Endothelial cell of umbilical vein (primary cell): ENCODE measurements at regions of chr17 and their contacts with region 1.

Region 1: GRCh38 chr17:48878918-48879898 is 13.4 kb upstream of the ATP5MC1 start:
- DNase-seq: peak; percentile 76
- H3K4me3 ChIP-seq: no peak overlapping the region
- H3K27ac ChIP-seq: no peak overlapping the region
- H3K4me1 ChIP-seq: no peaks in the 10 kb centered on the region
- H3K27me3 ChIP-seq: no peaks in the 10 kb centered on the region
- CTCF ChIP-seq: peak; percentile 87 to 89
- POLR2A ChIP-seq: no peak

Region 2: DNA sequence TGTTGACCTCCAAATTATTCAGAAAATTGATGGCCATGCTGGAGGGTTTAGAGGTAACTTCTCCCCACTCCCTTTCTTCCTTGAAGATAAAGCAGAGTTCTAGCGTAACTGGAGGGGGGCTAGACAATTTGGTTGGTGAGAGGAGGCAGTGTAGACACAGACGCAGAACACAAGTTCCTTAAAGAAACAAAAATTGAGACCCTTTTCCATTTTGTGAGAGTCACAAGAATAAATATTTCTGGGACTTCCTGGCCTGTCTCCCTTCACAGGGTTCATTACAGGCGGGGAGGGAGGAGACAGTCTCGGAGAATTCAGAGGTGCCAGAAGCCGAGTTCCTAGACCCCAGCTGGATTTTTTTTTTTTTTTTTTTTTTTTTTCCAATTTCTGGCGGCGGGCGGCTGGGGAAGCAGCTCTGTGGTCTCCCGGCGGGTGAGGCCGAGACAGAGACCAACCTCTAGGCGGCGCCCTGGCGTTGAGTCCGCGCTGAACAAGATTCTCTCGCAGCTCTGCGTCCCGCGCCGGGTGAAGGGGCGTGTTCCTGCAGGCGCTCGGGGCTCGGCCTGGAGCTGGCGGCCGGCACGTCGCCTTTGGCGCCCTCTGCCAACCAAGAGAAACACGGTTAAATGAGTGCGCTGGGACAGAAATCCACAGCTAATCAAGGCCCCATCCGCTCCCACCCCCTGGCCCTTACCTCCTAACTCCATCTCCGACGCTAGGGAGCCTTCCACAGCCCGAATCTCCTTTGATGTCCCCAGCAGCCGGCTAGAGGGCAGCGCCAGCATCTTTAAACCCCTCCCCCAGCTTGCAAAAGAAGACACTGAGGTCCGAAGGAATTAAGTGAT is 242.8 kb before region 1 on chr17:
- CTCF ChIA-PET with region 1: interaction called, 20 read pairs
- POLR2A ChIA-PET with region 1: no interaction called
- dilution Hi-C with region 1: no loop called
- intact Hi-C with region 1: no loop called
- DNase-seq: peak; percentile 93
- H3K4me3 ChIP-seq: no peak overlapping the region
- H3K27ac ChIP-seq: no peak overlapping the region
- H3K4me1 ChIP-seq: no peaks in the 10 kb centered on the region
- H3K27me3 ChIP-seq: peaks cover 69 to 85% of the 10 kb centered on the region in 2 experiments
- CTCF ChIP-seq: peak; percentile 89 to 96
- POLR2A ChIP-seq: no peak

Region 3: DNA sequence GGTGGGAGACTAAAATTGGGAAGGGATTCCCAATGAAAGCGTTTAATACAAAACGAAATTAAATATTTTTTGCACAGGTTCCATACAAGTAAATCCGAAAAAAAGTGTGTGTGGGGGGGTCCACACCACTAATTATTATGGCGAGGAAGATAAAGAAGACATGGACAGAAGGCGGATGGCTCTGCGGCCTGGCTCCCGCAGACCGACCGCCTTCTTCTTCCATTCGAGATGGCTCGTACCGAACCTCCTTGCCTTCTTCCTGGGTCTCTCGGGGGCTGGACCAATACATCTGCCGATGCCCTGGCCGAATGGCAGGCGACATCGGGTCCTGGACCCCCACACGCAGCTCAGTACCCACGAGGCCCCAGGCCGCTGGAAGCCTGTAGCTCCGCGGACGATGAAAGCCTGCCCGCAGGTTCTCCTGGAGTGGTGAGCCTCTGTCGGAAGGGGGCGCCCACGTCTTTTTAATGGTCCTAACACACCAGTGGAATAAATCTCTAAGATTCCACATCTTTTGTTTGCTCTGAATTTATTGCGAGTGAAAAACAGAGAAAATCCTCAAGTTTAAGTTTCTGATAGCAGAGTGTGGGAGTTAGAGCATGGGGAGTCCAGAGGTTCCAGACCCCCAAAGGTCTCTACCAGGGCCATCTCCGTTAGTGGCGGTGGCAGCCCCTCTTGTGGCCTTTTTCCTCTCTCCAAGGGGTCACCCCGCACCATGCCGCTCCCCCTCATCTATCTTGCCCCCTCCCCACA is 154.8 kb before region 1 on chr17:
- CTCF ChIA-PET with region 1: interaction called, 171 read pairs
- POLR2A ChIA-PET with region 1: no interaction called
- dilution Hi-C with region 1: no loop called
- intact Hi-C with region 1: loop called (anchors 1 kb)
- DNase-seq: peak; percentile 69
- H3K4me3 ChIP-seq: no peak overlapping the region
- H3K27ac ChIP-seq: no peak overlapping the region
- H3K4me1 ChIP-seq: peaks cover 5% of the 10 kb centered on the region
- H3K27me3 ChIP-seq: peaks cover 93 to 98% of the 10 kb centered on the region in 2 experiments
- CTCF ChIP-seq: peak; percentile 74 to 81
- POLR2A ChIP-seq: no peak

Region 4: GRCh38 chr17:48791128-48792032 is 87.8 kb before region 1 on chr17:
- CTCF ChIA-PET with region 1: interaction called, 37 read pairs
- POLR2A ChIA-PET with region 1: no interaction called
- dilution Hi-C with region 1: no loop called
- intact Hi-C with region 1: no loop called
- DNase-seq: peak; percentile 79
- H3K4me3 ChIP-seq: no peak overlapping the region
- H3K27ac ChIP-seq: no peak overlapping the region
- H3K4me1 ChIP-seq: no peaks in the 10 kb centered on the region
- H3K27me3 ChIP-seq: peaks cover 9 to 15% of the 10 kb centered on the region in 2 experiments
- CTCF ChIP-seq: peak; percentile 78 to 84
- POLR2A ChIP-seq: no peak

Region 5: DNA sequence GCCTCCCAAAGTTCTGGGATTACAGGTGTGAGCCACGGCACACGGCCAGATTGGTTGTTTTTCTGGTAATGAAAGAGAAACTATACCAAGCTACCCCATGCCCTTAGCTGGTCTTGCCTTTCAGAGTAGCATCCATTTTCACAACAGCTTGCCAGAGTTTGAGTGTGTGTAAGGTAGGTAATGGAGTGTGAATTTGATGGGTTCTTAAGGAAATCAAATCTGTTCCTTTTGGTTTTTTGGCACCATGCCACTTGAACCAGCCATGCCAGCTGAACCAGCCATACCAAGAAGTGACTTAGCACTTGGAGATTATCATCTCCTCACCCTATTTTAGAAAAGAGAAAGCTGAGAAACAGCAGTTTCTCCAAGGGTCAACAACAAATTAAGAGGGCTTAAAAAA is 43.2 kb before region 1 on chr17:
- CTCF ChIA-PET with region 1: interaction called, 18 read pairs
- POLR2A ChIA-PET with region 1: no interaction called
- dilution Hi-C with region 1: no loop called
- intact Hi-C with region 1: no loop called
- DNase-seq: no peak
- H3K4me3 ChIP-seq: no peak overlapping the region
- H3K27ac ChIP-seq: no peak overlapping the region
- H3K4me1 ChIP-seq: peaks cover 11% of the 10 kb centered on the region
- H3K27me3 ChIP-seq: no peaks in the 10 kb centered on the region
- CTCF ChIP-seq: no peak
- POLR2A ChIP-seq: no peak

Region 6: DNA sequence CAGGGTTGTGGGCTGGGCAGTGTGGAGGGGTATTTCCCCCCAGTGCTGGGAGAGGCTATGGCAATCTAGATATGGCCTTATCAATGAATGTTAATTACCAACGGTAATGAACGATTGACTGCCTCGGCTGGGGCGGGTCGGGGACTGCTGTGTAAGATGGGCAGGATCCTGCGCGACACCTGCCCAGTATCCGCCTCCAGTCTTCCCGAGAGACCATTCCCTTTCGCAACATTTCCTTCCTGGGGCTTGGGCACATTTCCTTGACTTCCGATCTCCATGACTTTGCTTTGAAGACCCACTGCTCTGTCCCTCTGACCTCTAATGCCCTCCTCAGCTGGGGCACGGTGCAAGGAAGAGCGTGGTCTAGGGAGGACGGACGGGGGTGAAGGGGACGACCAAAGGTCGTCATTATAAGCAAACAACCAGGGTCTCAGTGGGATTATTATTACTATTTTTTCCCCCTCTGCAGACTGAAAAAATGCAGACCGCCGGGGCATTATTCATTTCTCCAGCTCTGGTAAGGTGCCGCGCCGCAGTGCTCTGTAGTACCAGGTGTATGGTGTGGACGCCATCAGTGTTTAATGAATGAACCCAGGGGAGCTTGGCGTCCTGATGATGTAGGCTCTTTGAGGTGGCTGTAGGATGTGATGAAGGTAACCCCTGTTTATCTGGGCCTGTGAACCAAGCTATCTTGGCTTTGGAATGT is 13.9 kb after region 1 on chr17:
- CTCF ChIA-PET with region 1: interaction called, 17 read pairs
- POLR2A ChIA-PET with region 1: no interaction called
- dilution Hi-C with region 1: no loop called
- intact Hi-C with region 1: no loop called
- DNase-seq: no peak
- H3K4me3 ChIP-seq: peak overlapping the region; percentile 3 to 79 (median 61)
- H3K27ac ChIP-seq: peak overlapping the region; percentile 44
- H3K4me1 ChIP-seq: peaks cover 11% of the 10 kb centered on the region
- H3K27me3 ChIP-seq: no peaks in the 10 kb centered on the region
- CTCF ChIP-seq: no peak
- POLR2A ChIP-seq: peak; percentile 48

Region 7: DNA sequence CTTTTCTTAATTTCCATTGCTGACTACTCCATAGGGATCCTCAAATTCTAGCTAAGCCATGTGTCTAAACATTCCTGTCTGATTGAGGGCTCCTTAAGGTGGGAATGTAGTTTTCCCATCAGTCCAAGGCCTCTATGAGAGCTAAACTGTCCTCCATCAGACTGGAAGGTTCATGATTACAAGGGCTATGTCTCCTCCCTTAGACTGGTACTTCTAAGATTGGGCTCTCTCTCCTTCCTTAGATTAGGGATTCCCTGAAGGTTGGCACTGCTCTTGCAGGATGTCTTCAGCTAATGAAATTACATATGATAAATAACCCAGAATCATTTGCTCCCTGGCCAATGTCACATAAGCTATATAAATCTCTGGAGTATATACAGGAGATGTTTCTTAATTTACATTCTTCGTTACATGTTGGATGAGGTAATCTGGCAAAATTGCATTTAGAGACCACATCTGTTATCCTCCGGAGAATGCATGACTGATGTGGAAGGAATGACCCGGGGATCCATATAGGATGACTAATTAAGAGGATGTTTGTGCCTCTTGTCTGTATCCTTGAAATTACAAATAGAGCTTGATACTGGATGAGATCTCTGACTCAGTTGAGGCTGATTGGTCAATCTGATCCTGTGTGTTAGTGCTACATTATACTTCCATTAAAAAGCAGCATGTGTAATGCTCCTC is 267.6 kb after region 1 on chr17:
- CTCF ChIA-PET with region 1: no interaction called
- POLR2A ChIA-PET with region 1: no interaction called
- dilution Hi-C with region 1: no loop called
- intact Hi-C with region 1: no loop called
- DNase-seq: peak; percentile 90
- H3K4me3 ChIP-seq: no peak overlapping the region
- H3K27ac ChIP-seq: peak overlapping the region; percentile 91
- H3K4me1 ChIP-seq: peaks cover 5% of the 10 kb centered on the region
- H3K27me3 ChIP-seq: peaks cover 0 to under 1% of the 10 kb centered on the region in 2 experiments
- CTCF ChIP-seq: no peak
- POLR2A ChIP-seq: no peak